ENCODE measurements at regions of chr1 and their contacts with region 1.

Region 1: DNA sequence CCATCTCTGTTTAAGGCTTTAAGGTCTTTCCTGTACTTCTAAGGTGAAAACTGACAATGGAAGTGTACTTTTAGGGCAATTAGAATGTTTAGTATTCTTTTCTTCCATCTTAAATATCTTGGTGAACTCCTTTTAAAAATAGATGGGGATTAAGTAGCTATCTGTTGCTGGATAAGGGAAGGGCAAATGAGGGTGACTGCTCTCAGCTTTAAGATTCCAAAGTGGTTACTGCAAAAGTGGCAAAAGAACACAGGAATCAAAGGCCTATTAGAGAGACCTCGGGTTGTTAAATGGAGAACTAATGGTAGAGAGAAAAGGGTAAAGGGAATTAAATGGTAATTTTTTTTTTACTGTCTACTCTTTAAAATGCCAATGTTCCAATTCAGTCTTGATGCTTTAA is 774.1 kb upstream of the B3GALT2 start:
- DNase-seq: no peak
- ATAC-seq: peak; percentile 48 to 80 (median 62)
- H3K4me3 ChIP-seq: no peak overlapping the region
- H3K27ac ChIP-seq: peak overlapping the region in 10 of 12 donors; percentile 37 to 82 (median 56)
- H3K4me1 ChIP-seq: peaks cover 0 to 18% (median 0%) of the 10 kb centered on the region in 12 donors
- H3K27me3 ChIP-seq: no peaks in the 10 kb centered on the region
- CTCF ChIP-seq: no peak
- POLR2A ChIP-seq: no peak

Region 2: DNA sequence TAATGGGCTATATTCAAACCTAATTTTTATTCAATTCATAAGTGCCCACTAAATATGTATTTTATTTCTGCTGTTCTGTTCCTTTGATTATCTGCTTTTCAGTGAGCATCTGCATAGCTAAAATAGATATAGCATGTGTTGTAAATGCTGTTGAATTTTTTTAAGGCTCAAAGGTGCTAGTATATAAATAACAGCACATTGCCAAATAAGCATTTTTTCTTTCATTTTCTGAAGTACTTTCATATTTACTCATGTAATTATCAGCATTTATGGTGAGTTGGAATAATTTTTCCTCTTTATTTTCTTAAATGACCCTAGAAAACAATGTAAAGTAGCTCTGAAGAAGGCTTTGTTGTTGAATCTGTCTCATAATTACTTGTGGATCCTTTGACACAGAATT is 704.5 kb before region 1 on chr1:
- intact Hi-C with region 1: loop called in 1 of 10 experiments (anchors 10 kb)
- DNase-seq: no peak
- ATAC-seq: no peak
- H3K4me3 ChIP-seq: no peak overlapping the region
- H3K27ac ChIP-seq: no peak overlapping the region
- H3K4me1 ChIP-seq: peaks cover 0 to 12% (median 0%) of the 10 kb centered on the region in 12 donors
- H3K27me3 ChIP-seq: no peaks in the 10 kb centered on the region
- CTCF ChIP-seq: no peak
- POLR2A ChIP-seq: no peak